GM12878 (cell line): ENCODE measurements at regions of chr11 and their contacts with region 1.

Region 1: GRCh38 chr11:32006799-32007388 is 84.0 kb upstream of the RCN1 start:
- DNase-seq: peak; percentile 11
- ATAC-seq: peak; percentile 87
- H3K4me3 ChIP-seq: no peak overlapping the region
- H3K27ac ChIP-seq: no peak overlapping the region
- H3K4me1 ChIP-seq: no peaks in the 10 kb centered on the region
- H3K27me3 ChIP-seq: no peaks in the 10 kb centered on the region
- CTCF ChIP-seq: peak; percentile 68 to 75 (median 72); a peak in 5 of 6 replicates
- EP300 ChIP-seq: no peak
- POLR2A ChIP-seq: no peak
- RAD21 ChIP-seq: peak; percentile 68

Region 2: DNA sequence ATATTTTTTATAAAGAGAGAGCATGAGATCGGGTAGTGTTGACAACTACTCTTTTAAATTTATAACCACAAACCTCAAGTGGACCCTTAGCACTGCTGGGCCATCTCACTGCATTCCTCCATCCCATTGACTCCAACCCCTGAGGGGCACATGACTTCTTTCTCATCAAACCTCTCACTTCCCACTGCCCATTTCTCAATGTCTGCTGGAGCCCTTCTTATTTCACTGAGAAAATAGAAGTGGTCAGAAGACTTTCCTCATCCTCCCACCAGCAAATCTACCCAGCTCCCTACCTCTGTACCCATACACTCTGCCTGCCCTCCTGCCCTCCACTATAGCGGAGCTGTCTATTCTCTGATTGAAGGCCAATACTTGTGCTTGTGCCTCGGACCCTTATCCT is 1050.1 kb before region 1 on chr11:
- CTCF ChIA-PET with region 1: no interaction called
- POLR2A ChIA-PET with region 1: no interaction called
- RAD21 ChIA-PET with region 1: no interaction called
- SMC1A ChIA-PET with region 1: no interaction called
- in situ Hi-C with region 1: no loop called
- intact Hi-C with region 1: no loop called
- DNase-seq: no peak
- ATAC-seq: no peak
- H3K4me3 ChIP-seq: no peak overlapping the region
- H3K27ac ChIP-seq: no peak overlapping the region
- H3K4me1 ChIP-seq: no peaks in the 10 kb centered on the region
- H3K27me3 ChIP-seq: no peaks in the 10 kb centered on the region
- CTCF ChIP-seq: no peak
- EP300 ChIP-seq: no peak
- POLR2A ChIP-seq: no peak
- RAD21 ChIP-seq: no peak

Region 3: GRCh38 chr11:31397239-31397834 is 609.6 kb before region 1 on chr11:
- CTCF ChIA-PET with region 1: interaction called, 4 read pairs
- POLR2A ChIA-PET with region 1: no interaction called
- RAD21 ChIA-PET with region 1: no interaction called
- SMC1A ChIA-PET with region 1: interaction called, 8 read pairs
- in situ Hi-C with region 1: no loop called
- intact Hi-C with region 1: loop called (anchors 2 kb)
- DNase-seq: no peak
- ATAC-seq: peak; percentile 70
- H3K4me3 ChIP-seq: no peak overlapping the region
- H3K27ac ChIP-seq: no peak overlapping the region
- H3K4me1 ChIP-seq: no peaks in the 10 kb centered on the region
- H3K27me3 ChIP-seq: no peaks in the 10 kb centered on the region
- CTCF ChIP-seq: peak; percentile 43 to 72 (median 55); a peak in 5 of 6 replicates
- EP300 ChIP-seq: no peak
- POLR2A ChIP-seq: no peak
- RAD21 ChIP-seq: peak; percentile 78

Region 4: DNA sequence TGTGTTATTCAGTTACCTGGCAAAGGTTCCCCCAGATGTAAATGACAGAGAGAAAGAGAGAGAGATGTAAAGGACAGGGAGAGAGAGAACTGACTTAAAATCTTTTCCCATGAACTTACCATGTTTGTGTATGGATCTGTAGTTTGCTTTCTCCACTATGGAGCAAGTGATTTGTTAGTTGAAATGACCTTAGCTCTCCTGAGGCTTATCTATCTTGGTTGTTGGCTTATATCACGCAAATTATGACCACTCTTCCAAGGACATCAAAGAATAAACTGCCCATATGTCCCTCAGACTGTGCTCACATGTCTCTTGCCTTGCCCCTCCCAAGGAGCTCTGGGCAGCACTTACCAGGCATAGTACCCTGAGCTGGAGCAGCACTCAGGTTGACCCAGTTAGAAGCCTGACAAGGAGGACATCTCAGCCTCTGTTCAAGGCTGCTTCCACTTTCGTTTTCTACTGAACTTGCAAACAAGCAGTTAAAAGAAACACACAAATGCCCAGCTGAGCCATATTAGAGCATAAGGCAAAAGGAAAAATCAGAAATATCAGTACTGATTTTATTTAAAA is 11.3 kb before region 1 on chr11:
- CTCF ChIA-PET with region 1: interaction called, 10 read pairs
- POLR2A ChIA-PET with region 1: no interaction called
- RAD21 ChIA-PET with region 1: interaction called, 4 read pairs
- SMC1A ChIA-PET with region 1: interaction called, 4 read pairs
- in situ Hi-C with region 1: no loop called
- intact Hi-C with region 1: no loop called
- DNase-seq: peak; percentile 26
- ATAC-seq: peak; percentile 92
- H3K4me3 ChIP-seq: no peak overlapping the region; the same call in 1 of the 2 replicates
- H3K27ac ChIP-seq: no peak overlapping the region
- H3K4me1 ChIP-seq: peaks cover 4% of the 10 kb centered on the region
- H3K27me3 ChIP-seq: no peaks in the 10 kb centered on the region
- CTCF ChIP-seq: no peak
- EP300 ChIP-seq: no peak
- POLR2A ChIP-seq: peak; percentile 52; the same call in 1 of the 2 replicates
- RAD21 ChIP-seq: no peak

Region 5: DNA sequence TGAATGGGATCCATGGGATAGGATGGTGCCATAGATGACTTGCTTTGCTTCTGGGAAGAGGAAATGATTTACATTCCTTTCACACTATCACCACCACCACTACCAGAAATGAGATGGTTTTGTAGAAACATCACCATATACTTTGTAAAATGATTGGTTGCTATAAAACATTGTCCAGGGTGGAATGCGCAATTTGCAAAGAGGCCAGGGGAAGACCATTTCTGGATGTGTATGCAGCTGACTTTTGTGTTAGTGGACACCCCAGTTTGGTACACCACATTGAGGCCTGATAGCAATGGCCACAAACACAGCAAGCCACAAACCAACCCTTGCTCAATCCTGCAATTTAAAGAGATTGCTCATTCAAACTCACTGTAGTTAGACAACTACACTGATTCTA is 27.3 kb after region 1 on chr11:
- CTCF ChIA-PET with region 1: interaction called, 10 read pairs
- POLR2A ChIA-PET with region 1: interaction called, 3 read pairs
- RAD21 ChIA-PET with region 1: interaction called, 4 read pairs
- SMC1A ChIA-PET with region 1: interaction called, 8 read pairs
- in situ Hi-C with region 1: no loop called
- intact Hi-C with region 1: no loop called
- DNase-seq: no peak
- ATAC-seq: no peak
- H3K4me3 ChIP-seq: no peak overlapping the region
- H3K27ac ChIP-seq: no peak overlapping the region
- H3K4me1 ChIP-seq: 0 out of 2 replicates have a peak, but pooled peaks cover 4% of the 10 kb centered on the region
- H3K27me3 ChIP-seq: no peaks in the 10 kb centered on the region
- CTCF ChIP-seq: no peak
- EP300 ChIP-seq: no peak
- POLR2A ChIP-seq: no peak
- RAD21 ChIP-seq: no peak

Region 6: DNA sequence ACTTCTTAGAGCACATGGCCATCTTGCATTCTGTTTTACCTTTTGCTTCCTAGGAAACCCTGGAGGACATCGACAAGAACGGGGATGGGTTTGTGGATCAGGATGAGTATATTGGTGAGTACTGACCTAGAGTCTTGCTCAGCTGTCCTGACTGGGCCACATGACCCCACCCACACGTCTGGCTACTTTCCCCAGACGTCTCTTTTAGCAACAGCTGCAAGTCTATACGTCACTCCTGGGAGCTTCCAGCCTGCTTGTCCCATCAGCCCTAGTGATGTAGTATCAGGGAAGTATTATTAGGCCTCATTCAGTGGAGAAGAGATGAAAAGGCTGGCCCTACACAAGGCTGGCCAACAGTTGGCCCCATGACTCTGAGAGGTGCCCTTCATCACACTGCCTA is 93.6 kb after region 1 on chr11:
- CTCF ChIA-PET with region 1: no interaction called
- POLR2A ChIA-PET with region 1: no interaction called
- RAD21 ChIA-PET with region 1: no interaction called
- SMC1A ChIA-PET with region 1: no interaction called
- in situ Hi-C with region 1: no loop called
- intact Hi-C with region 1: no loop called
- DNase-seq: no peak
- ATAC-seq: no peak
- H3K4me3 ChIP-seq: no peak overlapping the region
- H3K27ac ChIP-seq: no peak overlapping the region
- H3K4me1 ChIP-seq: peaks cover 4% of the 10 kb centered on the region
- H3K27me3 ChIP-seq: no peaks in the 10 kb centered on the region
- CTCF ChIP-seq: no peak
- EP300 ChIP-seq: no peak
- POLR2A ChIP-seq: no peak
- RAD21 ChIP-seq: no peak

Region 7: GRCh38 chr11:32118025-32118974 is 111.4 kb after region 1 on chr11:
- CTCF ChIA-PET with region 1: no interaction called
- POLR2A ChIA-PET with region 1: no interaction called
- RAD21 ChIA-PET with region 1: no interaction called
- SMC1A ChIA-PET with region 1: no interaction called
- in situ Hi-C with region 1: no loop called
- intact Hi-C with region 1: no loop called
- DNase-seq: no peak
- ATAC-seq: no peak
- H3K4me3 ChIP-seq: no peak overlapping the region
- H3K27ac ChIP-seq: no peak overlapping the region
- H3K4me1 ChIP-seq: peaks cover 7% of the 10 kb centered on the region
- H3K27me3 ChIP-seq: no peaks in the 10 kb centered on the region
- CTCF ChIP-seq: no peak
- EP300 ChIP-seq: no peak
- POLR2A ChIP-seq: no peak
- RAD21 ChIP-seq: no peak